ENCODE measurements at regions of chr12 and their contacts with region 1.

Region 1: GRCh38 chr12:62426089-62426488 is 40.5 kb upstream of the MON2 start:
- DNase-seq: no peak
- H3K4me3 ChIP-seq: no peak overlapping the region
- H3K27ac ChIP-seq: no peak overlapping the region
- H3K27me3 ChIP-seq: peaks cover 0 to 6% (median 0%) of the 10 kb centered on the region in 45 donors
- CTCF ChIP-seq: no peak

Region 2: DNA sequence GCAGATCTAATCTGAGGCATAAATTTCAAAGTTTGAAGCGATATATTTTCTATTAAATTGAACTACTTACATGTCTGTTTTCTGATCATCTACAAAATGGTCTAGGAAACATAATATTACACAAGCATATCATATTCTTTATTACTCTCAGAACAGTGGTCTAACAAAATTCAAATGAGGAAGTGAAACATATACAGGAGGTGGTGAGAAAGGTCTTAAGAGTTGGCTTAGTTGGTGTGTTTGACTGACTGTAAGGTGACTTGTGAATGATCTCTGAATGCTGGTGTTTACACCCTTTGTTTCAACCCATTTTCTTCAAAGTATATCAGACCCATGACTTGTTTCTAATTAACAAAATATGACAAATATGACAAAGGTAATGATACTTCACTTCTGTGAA is 1673.5 kb before region 1 on chr12:
- intact Hi-C with region 1: loop called in 1 of 2 experiments (anchors 5 kb)
- DNase-seq: no peak
- H3K4me3 ChIP-seq: no peak overlapping the region
- H3K27ac ChIP-seq: no peak overlapping the region
- H3K27me3 ChIP-seq: no peaks in the 10 kb centered on the region
- CTCF ChIP-seq: no peak

Measured in dorsolateral prefrontal cortex (tissue), 120 donors.